ENCODE measurements at regions of chr6 and their contacts with region 1.

Region 1: DNA sequence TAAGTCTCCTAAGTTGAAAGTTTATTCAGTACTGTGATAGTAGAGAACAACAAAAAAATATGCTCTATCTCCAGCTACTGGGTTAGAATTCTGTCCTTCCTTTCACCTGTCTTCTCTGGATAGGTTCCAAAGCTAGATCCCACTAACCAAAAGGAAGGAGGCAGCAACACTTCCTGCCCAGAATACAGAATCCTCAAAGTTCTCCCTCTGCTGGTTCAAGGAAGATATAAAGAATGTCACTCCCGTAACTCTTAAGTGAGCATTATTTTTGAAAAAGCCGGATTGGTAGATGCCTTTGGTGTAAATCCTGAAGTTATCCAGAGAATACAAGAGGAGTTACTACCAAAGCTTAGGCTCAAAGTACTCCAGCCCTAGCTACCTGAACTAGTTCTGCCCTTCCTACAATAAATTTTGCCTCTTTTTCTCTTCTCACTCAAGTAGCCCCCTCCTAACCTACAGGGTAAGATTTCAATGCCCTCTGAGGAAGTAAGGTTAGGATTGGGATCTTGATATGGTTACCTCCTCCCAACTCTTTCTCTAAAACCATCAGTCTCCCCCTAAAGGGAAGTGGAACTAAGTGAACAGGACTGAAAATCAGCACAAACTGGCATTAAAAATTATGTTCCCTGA is 26.0 kb upstream of the CRIP3 start:
- H3K4me3 ChIP-seq: no peak overlapping the region
- H3K27ac ChIP-seq: no peak overlapping the region
- H3K4me1 ChIP-seq: peaks cover 3% of the 10 kb centered on the region; the same call in 1 of the 2 replicates
- CTCF ChIP-seq: peak; percentile 39; the same call in 1 of the 2 replicates

Region 2: GRCh38 chr6:42417641-42418112 is 916.9 kb before region 1 on chr6:
- CTCF ChIA-PET with region 1: no interaction called
- POLR2A ChIA-PET with region 1: no interaction called
- H3K4me3 ChIP-seq: no peak overlapping the region
- H3K27ac ChIP-seq: no peak overlapping the region
- H3K4me1 ChIP-seq: no peaks in the 10 kb centered on the region
- CTCF ChIP-seq: no peak

Region 3: GRCh38 chr6:43228951-43229802 is 105.4 kb before region 1 on chr6 and contains the start of gene DNPH1:
- CTCF ChIA-PET with region 1: interaction called, 17 read pairs
- POLR2A ChIA-PET with region 1: no interaction called
- H3K4me3 ChIP-seq: peak within 1 kb of the TSS; percentile 87
- H3K27ac ChIP-seq: peak within 1 kb of the TSS; percentile 66
- H3K4me1 ChIP-seq: no peaks in the 10 kb centered on the region; the same call in 1 of the 2 replicates
- CTCF ChIP-seq: peak; percentile 75

Region 4: DNA sequence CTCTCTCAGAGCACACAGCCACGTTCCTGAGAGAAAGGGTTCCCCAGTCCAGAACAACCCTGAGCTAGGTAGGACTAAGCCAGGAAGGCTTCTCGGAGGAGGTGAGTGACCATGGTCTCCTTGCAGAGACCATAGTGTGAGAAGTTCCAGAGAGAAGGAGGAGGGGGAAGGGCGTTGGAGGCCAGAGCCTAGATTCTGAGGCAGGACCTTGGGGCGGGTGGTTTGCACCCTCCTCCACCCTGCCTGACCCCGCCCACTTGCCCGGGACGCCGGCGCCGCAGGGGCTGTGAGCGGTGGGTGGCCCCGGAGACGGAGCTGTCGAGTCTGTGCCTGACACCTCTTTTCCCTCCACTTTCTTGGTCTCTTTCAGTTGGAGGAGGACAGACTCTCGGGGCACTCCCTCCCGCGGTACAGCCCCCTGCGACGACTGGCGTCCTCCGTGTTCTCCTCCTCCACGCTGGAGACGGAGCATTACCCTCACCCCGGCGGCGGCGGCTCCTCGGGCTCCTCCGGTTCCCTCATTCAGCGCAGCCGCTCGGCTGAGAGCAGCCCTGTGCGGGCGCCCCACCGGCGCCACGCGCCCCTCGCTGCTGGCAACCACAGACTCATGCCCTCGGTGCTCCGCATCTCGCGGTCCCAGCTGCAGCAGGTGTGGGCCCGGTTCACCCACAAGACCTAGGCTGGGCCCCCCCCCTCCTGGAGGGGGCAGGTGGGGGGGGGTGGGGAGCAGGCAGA is 65.1 kb before region 1 on chr6:
- CTCF ChIA-PET with region 1: interaction called, 83 read pairs
- POLR2A ChIA-PET with region 1: no interaction called
- H3K4me3 ChIP-seq: no peak overlapping the region
- H3K27ac ChIP-seq: no peak overlapping the region
- H3K4me1 ChIP-seq: no peaks in the 10 kb centered on the region
- CTCF ChIP-seq: no peak

Region 5: DNA sequence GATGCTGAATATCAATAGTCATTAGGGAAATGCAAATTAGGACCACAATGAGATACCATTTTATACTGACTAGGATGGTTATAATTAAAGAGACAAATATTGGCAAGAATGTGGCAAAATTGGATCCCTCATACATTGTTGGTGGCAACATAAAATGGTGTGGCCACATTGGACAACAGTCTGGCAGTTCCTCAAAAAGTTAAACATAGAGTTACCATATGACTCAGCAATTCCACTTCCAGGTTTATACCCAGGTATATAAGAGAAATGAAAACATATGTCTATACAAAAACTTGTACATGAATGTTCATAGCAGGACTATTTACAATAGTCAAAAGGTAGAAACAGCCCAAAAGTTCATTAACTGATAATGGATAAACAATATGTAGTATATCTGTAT is 24.0 kb before region 1 on chr6:
- CTCF ChIA-PET with region 1: interaction called, 15 read pairs
- POLR2A ChIA-PET with region 1: no interaction called
- H3K4me3 ChIP-seq: no peak overlapping the region
- H3K27ac ChIP-seq: no peak overlapping the region
- H3K4me1 ChIP-seq: no peaks in the 10 kb centered on the region
- CTCF ChIP-seq: no peak

Region 6: DNA sequence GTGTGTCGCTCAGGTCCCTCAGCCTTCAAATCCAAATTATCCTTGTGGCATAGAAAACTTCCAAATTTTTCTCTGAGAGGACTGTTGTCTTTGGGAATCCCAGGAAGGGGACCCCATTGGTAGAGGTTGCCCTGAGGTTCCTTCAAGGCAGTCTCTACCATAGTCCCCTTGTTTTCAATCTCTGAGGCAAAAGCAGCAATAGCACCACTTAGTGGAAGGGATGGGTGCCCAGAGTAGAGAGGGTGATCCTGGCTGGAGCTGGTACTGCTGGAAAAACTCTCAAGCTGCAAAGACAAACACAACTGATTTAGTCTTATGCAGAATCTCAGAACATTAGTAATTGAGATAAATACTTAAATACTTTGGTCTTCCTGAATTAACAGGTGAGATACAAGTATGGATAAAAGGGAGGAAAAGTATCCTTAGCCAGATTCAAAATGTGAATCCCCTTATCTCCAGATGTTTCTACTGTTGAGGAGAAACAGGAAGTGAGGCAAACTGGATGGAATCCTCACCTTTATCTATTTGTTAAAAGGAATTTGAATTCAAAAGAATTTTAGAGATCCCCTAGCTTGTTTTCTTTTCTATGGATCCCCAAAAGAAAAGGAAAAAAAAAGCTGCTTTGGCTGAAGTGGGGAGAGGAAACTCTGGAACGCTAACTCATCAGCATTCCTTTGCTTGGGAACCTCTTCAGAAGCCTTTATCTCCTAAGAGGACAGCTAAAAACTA is 21.4 kb after region 1 on chr6:
- CTCF ChIA-PET with region 1: interaction called, 10 read pairs
- POLR2A ChIA-PET with region 1: no interaction called
- H3K4me3 ChIP-seq: no peak overlapping the region
- H3K27ac ChIP-seq: no peak overlapping the region
- H3K4me1 ChIP-seq: no peaks in the 10 kb centered on the region
- CTCF ChIP-seq: peak; percentile 38; the same call in 1 of the 2 replicates

Region 7: GRCh38 chr6:43481075-43481474 is 146.5 kb after region 1 on chr6:
- CTCF ChIA-PET with region 1: no interaction called
- POLR2A ChIA-PET with region 1: no interaction called
- H3K4me3 ChIP-seq: no peak overlapping the region
- H3K27ac ChIP-seq: no peak overlapping the region
- H3K4me1 ChIP-seq: peaks cover 10% of the 10 kb centered on the region
- CTCF ChIP-seq: no peak